ENCODE measurements at regions of chr3 and their contacts with region 1.

Region 1: DNA sequence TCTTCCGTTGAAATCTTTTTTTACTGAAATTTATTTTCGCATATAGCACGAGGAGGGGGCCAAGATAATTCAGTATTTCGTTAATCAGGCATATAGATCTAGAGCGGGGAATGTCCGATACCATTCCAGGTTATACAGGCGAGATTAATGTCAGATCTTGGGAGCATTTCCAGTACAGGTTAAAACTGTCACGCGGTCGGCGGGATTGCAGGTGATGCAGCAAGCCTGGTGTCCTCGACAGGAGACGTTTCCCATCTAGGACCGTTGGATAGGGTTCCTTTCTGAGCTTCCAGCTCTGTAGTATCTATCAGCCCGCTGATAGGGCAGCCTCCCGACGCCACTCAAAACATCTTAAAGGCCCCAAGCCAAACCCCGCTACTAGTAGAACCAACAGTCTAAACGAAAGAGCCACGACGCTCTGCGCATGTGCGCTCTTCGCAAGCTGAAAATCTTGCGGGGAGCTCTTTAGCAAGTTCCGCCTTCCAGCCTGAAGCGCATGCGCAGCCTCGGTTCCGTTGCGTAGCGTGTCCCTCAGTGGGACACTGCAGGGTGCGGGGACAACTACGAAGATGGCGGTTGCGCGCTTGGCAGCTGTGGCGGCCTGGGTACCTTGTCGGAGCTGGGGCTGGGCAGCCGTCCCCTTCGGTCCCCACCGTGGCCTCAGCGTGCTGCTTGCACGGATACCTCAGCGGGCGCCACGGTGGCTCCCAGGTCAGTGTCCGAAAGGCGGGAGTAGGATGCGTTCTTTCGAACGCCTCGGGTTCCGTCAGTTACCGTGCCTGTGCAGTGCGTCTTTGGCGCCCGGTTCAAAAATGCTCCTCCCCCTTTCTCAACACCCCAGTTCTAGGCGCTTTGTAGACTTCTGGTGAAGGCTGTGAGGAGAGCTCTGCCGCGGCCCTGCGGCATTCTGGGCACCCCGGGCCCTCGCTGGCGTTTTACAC is at the start of gene ABHD10:
- DNase-seq: peak; percentile 90 to 97 (median 93)
- ATAC-seq: peak; percentile 95
- H3K4me3 ChIP-seq: peak within 1 kb of the TSS; percentile 83
- H3K4me3 Mint-ChIP-seq: peak within 1 kb of the TSS; percentile 82 to 97 (median 92)
- H3K27ac ChIP-seq: peak within 1 kb of the TSS; percentile 75
- H3K27ac Mint-ChIP-seq: peak within 1 kb of the TSS; percentile 92 to 96 (median 94)
- H3K4me1 ChIP-seq: peaks cover 16 to 24% of the 10 kb centered on the region in 2 donors
- H3K4me1 Mint-ChIP-seq: peaks cover 19 to 54% (median 44%) of the 10 kb centered on the region in 7 donors
- H3K27me3 ChIP-seq: no peaks in the 10 kb centered on the region
- H3K27me3 Mint-ChIP-seq: peaks cover 0 to 25% (median 0%) of the 10 kb centered on the region in 5 donors
- total RNA-seq, gene ABHD10: 18.4 to 43.6 (median 34.9) TPM

Region 2: GRCh38 chr3:111252779-111253178 is 726.0 kb before region 1 on chr3:
- CTCF ChIA-PET with region 1: no interaction called
- POLR2A ChIA-PET with region 1: no interaction called
- intact Hi-C with region 1: no loop called
- DNase-seq: no peak
- ATAC-seq: no peak
- H3K4me3 ChIP-seq: no peak overlapping the region
- H3K4me3 Mint-ChIP-seq: no peak overlapping the region
- H3K27ac ChIP-seq: no peak overlapping the region
- H3K27ac Mint-ChIP-seq: no peak overlapping the region
- H3K4me1 ChIP-seq: no peaks in the 10 kb centered on the region
- H3K4me1 Mint-ChIP-seq: peaks cover 0 to 29% (median 5%) of the 10 kb centered on the region in 7 donors
- H3K27me3 ChIP-seq: no peaks in the 10 kb centered on the region
- H3K27me3 Mint-ChIP-seq: peaks cover 0 to 13% (median 0%) of the 10 kb centered on the region in 5 donors

Region 3: DNA sequence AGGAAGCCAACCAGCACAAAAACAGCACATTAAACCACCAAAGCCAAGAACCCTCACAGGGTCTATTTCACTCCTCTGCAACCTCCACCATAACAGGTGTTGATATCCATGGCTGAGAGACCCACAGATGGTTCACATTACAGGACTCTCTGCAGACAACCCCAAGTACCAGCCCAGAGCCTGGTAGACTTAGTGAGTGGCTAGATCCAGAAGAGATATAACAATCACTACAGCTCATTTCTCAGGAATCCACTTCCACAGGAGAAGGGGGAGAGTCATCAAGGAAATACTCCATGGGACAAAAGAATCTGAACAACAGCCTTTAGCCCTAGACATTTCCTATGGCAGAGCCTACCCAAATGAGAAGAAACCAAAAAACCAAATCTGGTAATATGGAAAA is 604.9 kb before region 1 on chr3:
- CTCF ChIA-PET with region 1: no interaction called
- POLR2A ChIA-PET with region 1: no interaction called
- intact Hi-C with region 1: no loop called
- DNase-seq: no peak
- ATAC-seq: no peak
- H3K4me3 ChIP-seq: no peak overlapping the region
- H3K4me3 Mint-ChIP-seq: no peak overlapping the region
- H3K27ac ChIP-seq: no peak overlapping the region
- H3K27ac Mint-ChIP-seq: peak overlapping the region in 1 of 9 donors; percentile 50
- H3K4me1 ChIP-seq: no peaks in the 10 kb centered on the region
- H3K4me1 Mint-ChIP-seq: no peaks in the 10 kb centered on the region
- H3K27me3 ChIP-seq: no peaks in the 10 kb centered on the region
- H3K27me3 Mint-ChIP-seq: peaks cover 0 to 8% (median 0%) of the 10 kb centered on the region in 5 donors

Region 4: DNA sequence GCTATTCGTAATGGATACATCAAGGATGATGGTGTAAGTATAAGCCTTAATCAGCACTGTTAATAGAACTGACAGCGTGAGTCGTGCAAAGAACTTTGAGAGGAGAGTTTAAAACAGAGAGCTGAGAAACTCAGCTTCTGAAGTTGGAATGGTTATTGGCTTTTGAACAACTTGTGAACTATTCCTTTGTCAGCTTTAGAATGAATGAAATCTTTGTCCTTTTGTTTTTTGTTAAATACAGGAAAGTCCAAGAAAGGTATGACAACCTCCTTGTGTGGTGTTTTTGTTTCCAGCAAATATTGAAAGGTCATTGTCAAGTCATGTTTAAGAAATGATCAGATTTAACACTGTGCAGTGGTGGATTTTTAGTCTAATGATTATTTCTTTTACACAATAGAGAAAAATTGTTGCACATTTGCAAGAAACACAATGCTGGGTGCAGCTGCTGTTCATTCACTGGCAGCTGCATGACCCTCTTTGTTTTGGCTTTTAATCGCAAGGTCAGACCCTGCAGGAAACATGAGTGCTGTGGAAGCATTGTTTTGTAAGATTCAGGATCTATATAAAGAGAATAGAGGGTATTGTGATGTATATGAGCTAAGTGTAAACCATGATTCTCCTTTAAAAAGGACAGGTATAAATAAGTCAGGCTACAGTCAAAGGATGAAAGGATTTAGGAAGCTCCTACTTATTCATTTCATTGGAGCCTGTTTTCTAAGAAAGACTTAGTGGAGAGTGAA is 21.6 kb before region 1 on chr3:
- CTCF ChIA-PET with region 1: no interaction called
- POLR2A ChIA-PET with region 1: no interaction called
- intact Hi-C with region 1: no loop called
- DNase-seq: no peak
- ATAC-seq: no peak
- H3K4me3 ChIP-seq: no peak overlapping the region
- H3K4me3 Mint-ChIP-seq: no peak overlapping the region
- H3K27ac ChIP-seq: no peak overlapping the region
- H3K27ac Mint-ChIP-seq: no peak overlapping the region
- H3K4me1 ChIP-seq: no peaks in the 10 kb centered on the region
- H3K4me1 Mint-ChIP-seq: no peaks in the 10 kb centered on the region
- H3K27me3 ChIP-seq: no peaks in the 10 kb centered on the region
- H3K27me3 Mint-ChIP-seq: peaks cover 0 to 3% (median 0%) of the 10 kb centered on the region in 5 donors

Region 5: GRCh38 chr3:111967651-111968274 is 11.0 kb before region 1 on chr3:
- CTCF ChIA-PET with region 1: interaction called, 11 read pairs
- POLR2A ChIA-PET with region 1: interaction called, 7 read pairs
- intact Hi-C with region 1: loop called (anchors 1 kb)
- DNase-seq: peak; percentile 44 to 72 (median 64)
- ATAC-seq: peak; percentile 96
- H3K4me3 ChIP-seq: no peak overlapping the region
- H3K4me3 Mint-ChIP-seq: peak overlapping the region in 2 of 10 donors; percentile 12 to 44
- H3K27ac ChIP-seq: no peak overlapping the region
- H3K27ac Mint-ChIP-seq: peak overlapping the region in 1 of 9 donors; percentile 71
- H3K4me1 ChIP-seq: peaks cover 0 to 4% of the 10 kb centered on the region in 2 donors
- H3K4me1 Mint-ChIP-seq: peaks cover 3 to 13% (median 5%) of the 10 kb centered on the region in 7 donors
- H3K27me3 ChIP-seq: no peaks in the 10 kb centered on the region
- H3K27me3 Mint-ChIP-seq: no peaks in the 10 kb centered on the region

Region 6: GRCh38 chr3:111998636-111999483 is 20.1 kb after region 1 on chr3 and contains the start of gene TAGLN3:
- CTCF ChIA-PET with region 1: no interaction called
- POLR2A ChIA-PET with region 1: interaction called, 6 read pairs
- intact Hi-C with region 1: loop called in 1 of 2 experiments (anchors 1 kb)
- DNase-seq: peak in 1 of 9 donors; percentile 22
- ATAC-seq: peak; percentile 69
- H3K4me3 ChIP-seq: peak within 1 kb of the TSS; percentile 49
- H3K4me3 Mint-ChIP-seq: peak within 1 kb of the TSS; percentile 75 to 91 (median 85)
- H3K27ac ChIP-seq: no peak within 1 kb of the TSS
- H3K27ac Mint-ChIP-seq: peak within 1 kb of the TSS in 2 of 9 donors; percentile 43 to 67
- H3K4me1 ChIP-seq: peaks cover 5 to 22% of the 10 kb centered on the region in 2 donors
- H3K4me1 Mint-ChIP-seq: peaks cover 16 to 47% (median 35%) of the 10 kb centered on the region in 7 donors
- H3K27me3 ChIP-seq: no peaks in the 10 kb centered on the region
- H3K27me3 Mint-ChIP-seq: no peaks in the 10 kb centered on the region
- total RNA-seq, gene TAGLN3: 0.51 TPM in 1 of 5 experiments, not detected in the others

Region 7: DNA sequence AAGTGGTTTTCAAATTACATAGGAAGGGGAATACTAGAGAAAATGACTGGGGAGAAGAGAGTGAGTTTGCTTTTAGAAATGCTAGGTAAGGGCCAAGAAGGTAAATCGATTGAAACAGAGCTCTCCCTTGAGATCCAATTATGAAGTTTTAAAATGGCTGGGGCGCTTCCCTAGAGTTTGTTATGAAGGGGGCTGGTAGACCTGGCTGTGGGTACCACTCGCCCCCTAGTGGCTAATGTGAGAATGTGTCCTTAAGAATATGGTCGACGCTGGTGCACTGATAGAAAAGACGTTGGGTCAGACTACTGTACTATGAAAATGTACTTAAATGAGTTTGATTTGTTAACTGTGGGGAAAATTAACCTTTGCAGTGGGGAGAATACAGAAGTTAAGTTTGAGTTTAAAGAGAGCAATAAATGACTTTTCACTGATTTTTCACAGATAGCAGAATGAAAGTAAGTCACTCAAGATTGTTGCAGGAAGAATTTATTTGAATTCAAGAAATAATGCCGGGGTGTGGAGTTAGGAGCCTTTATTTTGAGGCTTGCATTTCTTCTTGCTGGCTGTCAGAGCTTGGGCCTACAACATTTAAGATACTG is 64.9 kb after region 1 on chr3:
- CTCF ChIA-PET with region 1: no interaction called
- POLR2A ChIA-PET with region 1: interaction called, 4 read pairs
- intact Hi-C with region 1: loop called in 1 of 2 experiments (anchors 2 kb)
- DNase-seq: peak in 8 of 9 donors; percentile 29 to 70 (median 58)
- ATAC-seq: peak; percentile 95
- H3K4me3 ChIP-seq: no peak overlapping the region
- H3K4me3 Mint-ChIP-seq: no peak overlapping the region
- H3K27ac ChIP-seq: no peak overlapping the region
- H3K27ac Mint-ChIP-seq: no peak overlapping the region
- H3K4me1 ChIP-seq: no peaks in the 10 kb centered on the region
- H3K4me1 Mint-ChIP-seq: no peaks in the 10 kb centered on the region
- H3K27me3 ChIP-seq: no peaks in the 10 kb centered on the region
- H3K27me3 Mint-ChIP-seq: peaks cover 0 to 3% (median 0%) of the 10 kb centered on the region in 5 donors

Region 8: DNA sequence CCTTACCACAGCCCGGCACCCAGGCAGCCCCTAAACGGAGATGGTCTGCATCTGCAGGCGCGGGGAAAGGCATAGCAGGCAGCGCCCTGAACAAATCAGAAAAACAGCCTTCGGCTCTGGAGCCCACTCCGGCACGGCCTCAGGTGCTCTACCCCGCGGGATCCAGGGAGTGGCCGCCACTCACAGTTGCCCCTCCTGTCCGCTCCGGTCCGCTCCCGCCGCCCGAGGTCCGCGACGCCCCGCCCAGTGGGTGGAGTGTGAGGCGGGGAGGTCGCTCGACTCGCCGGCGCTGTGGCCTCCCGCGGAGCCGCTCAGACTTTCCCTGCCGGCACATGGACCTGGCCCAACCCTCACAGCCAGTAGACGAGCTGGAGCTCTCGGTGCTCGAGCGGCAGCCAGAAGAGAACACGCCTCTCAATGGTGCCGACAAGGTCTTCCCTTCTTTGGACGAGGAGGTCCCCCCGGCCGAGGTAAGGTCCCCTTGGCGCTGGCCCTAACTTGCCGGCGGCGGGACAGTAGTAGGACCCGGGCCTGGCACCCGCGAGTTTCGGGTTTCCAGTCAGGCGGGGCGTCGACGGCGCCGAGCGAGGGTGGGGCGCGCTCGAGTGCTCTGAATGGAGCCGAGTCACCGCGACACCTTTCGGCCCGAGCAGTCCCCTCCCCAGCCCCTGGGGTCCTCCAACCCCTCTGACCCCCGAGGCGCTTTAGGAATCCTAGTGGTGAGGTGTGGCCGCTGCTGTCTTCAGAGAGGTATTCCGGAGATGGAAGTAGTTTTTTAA is 107.5 kb after region 1 on chr3 and contains the start of gene C3orf52:
- CTCF ChIA-PET with region 1: no interaction called
- POLR2A ChIA-PET with region 1: no interaction called
- intact Hi-C with region 1: loop called in 1 of 2 experiments (anchors 1 kb)
- DNase-seq: peak; percentile 37 to 84 (median 49)
- ATAC-seq: peak; percentile 89
- H3K4me3 ChIP-seq: peak within 1 kb of the TSS; percentile 64
- H3K4me3 Mint-ChIP-seq: peak within 1 kb of the TSS; percentile 81 to 91 (median 86)
- H3K27ac ChIP-seq: peak within 1 kb of the TSS; percentile 50
- H3K27ac Mint-ChIP-seq: peak within 1 kb of the TSS; percentile 25 to 89 (median 77)
- H3K4me1 ChIP-seq: peaks cover 8 to 10% of the 10 kb centered on the region in 2 donors
- H3K4me1 Mint-ChIP-seq: peaks cover 32 to 66% (median 46%) of the 10 kb centered on the region in 7 donors
- H3K27me3 ChIP-seq: no peaks in the 10 kb centered on the region
- H3K27me3 Mint-ChIP-seq: peaks cover 0 to 17% (median 3%) of the 10 kb centered on the region in 5 donors
- total RNA-seq, gene C3orf52: 1.2 to 12.3 (median 1.9) TPM

Region 9: GRCh38 chr3:112136959-112137693 is 158.4 kb after region 1 on chr3:
- CTCF ChIA-PET with region 1: no interaction called
- POLR2A ChIA-PET with region 1: no interaction called
- intact Hi-C with region 1: loop called in 1 of 2 experiments (anchors 2 kb)
- DNase-seq: peak in 5 of 9 donors; percentile 42 to 55 (median 53)
- ATAC-seq: no peak
- H3K4me3 ChIP-seq: no peak overlapping the region
- H3K4me3 Mint-ChIP-seq: peak overlapping the region in 2 of 10 donors; percentile 3 to 21
- H3K27ac ChIP-seq: no peak overlapping the region
- H3K27ac Mint-ChIP-seq: peak overlapping the region in 8 of 9 donors; percentile 0 to 99 (median 96)
- H3K4me1 ChIP-seq: peaks cover 19 to 45% of the 10 kb centered on the region in 2 donors
- H3K4me1 Mint-ChIP-seq: peaks cover 31 to 76% (median 60%) of the 10 kb centered on the region in 7 donors
- H3K27me3 ChIP-seq: no peaks in the 10 kb centered on the region
- H3K27me3 Mint-ChIP-seq: no peaks in the 10 kb centered on the region

Region 10: DNA sequence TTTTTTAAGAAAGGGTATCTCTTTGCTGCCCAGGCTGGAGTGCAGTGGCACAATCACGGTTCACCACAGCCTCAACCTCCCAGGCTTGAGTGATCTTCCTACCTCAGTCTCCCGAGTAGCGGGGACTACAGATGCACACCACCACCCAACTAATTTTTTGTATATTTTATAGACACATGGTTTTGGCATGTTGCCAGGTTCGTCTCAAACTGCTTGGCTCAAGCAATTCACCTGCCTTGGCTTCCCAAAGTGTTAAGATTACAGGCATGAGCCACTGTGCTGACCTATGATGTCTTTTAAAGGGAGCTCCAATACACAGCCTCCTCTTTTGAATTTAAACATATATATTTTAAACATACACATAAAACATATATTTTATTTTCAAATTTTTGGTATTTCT is 254.3 kb after region 1 on chr3:
- CTCF ChIA-PET with region 1: no interaction called
- POLR2A ChIA-PET with region 1: no interaction called
- intact Hi-C with region 1: no loop called
- DNase-seq: no peak
- ATAC-seq: no peak
- H3K4me3 ChIP-seq: no peak overlapping the region
- H3K4me3 Mint-ChIP-seq: no peak overlapping the region
- H3K27ac ChIP-seq: no peak overlapping the region
- H3K27ac Mint-ChIP-seq: no peak overlapping the region
- H3K4me1 ChIP-seq: no peaks in the 10 kb centered on the region
- H3K4me1 Mint-ChIP-seq: no peaks in the 10 kb centered on the region
- H3K27me3 ChIP-seq: no peaks in the 10 kb centered on the region
- H3K27me3 Mint-ChIP-seq: peaks cover 0 to 12% (median 0%) of the 10 kb centered on the region in 5 donors

Measured in naive thymus-derived CD4-positive, alpha-beta T cell (primary cell).